Activated naive CD4-positive, alpha-beta T cell treated with anti-CD3 and anti-CD28 coated beads for 36 hours (primary cell): ENCODE measurements at regions of chr7 and their contacts with region 1.

Region 1: GRCh38 chr7:112789817-112790585 is at the start of gene TMEM168:
- DNase-seq: peak; percentile 90
- H3K4me3 Mint-ChIP-seq: peak within 1 kb of the TSS; percentile 93
- H3K27ac Mint-ChIP-seq: peak within 1 kb of the TSS; percentile 85
- H3K4me1 Mint-ChIP-seq: peaks cover 43% of the 10 kb centered on the region
- H3K27me3 Mint-ChIP-seq: no peaks in the 10 kb centered on the region
- total RNA-seq, gene TMEM168: 18.6 to 20.4 TPM

Region 2: GRCh38 chr7:112206238-112207044 is 583.6 kb before region 1 on chr7 and contains the starts of genes DOCK4 and ZNF277:
- CTCF ChIA-PET with region 1: no interaction called
- intact Hi-C with region 1: loop called (anchors 1 kb)
- DNase-seq: peak; percentile 99
- H3K4me3 Mint-ChIP-seq: peak within 1 kb of the TSS; percentile 97
- H3K27ac Mint-ChIP-seq: peak within 1 kb of the TSS; percentile 71
- H3K4me1 Mint-ChIP-seq: peaks cover 35% of the 10 kb centered on the region
- H3K27me3 Mint-ChIP-seq: peaks cover 28% of the 10 kb centered on the region
- total RNA-seq, gene DOCK4: 0.43 to 0.62 TPM
- total RNA-seq, gene ZNF277: 27.0 to 28.2 TPM

Region 3: GRCh38 chr7:112869111-112869757 is 79.2 kb after region 1 on chr7:
- CTCF ChIA-PET with region 1: no interaction called
- intact Hi-C with region 1: loop called (anchors 5 kb)
- DNase-seq: peak; percentile 70
- H3K4me3 Mint-ChIP-seq: no peak overlapping the region
- H3K27ac Mint-ChIP-seq: no peak overlapping the region
- H3K4me1 Mint-ChIP-seq: peaks cover 14% of the 10 kb centered on the region
- H3K27me3 Mint-ChIP-seq: no peaks in the 10 kb centered on the region

Region 4: DNA sequence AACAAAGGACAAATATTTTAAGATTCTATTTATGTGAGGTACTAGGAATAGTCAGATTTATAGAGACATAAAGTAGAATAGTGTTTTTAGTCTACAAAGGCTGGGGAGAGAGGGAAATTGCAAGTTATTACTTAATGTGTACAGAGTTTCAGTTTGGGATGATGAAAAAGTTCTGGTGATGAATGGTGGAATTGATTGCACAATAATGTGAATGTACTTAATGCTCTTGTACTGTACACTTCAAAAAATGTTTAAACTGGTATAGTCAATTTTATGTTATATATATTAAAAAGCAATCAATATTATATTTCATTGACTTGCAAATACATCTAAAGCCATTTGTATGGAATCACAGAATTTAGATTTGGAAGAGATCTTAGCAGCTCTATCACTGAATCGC is 915.4 kb after region 1 on chr7:
- CTCF ChIA-PET with region 1: no interaction called
- intact Hi-C with region 1: loop called (anchors 10 kb)
- DNase-seq: no peak
- H3K4me3 Mint-ChIP-seq: no peak overlapping the region
- H3K27ac Mint-ChIP-seq: no peak overlapping the region
- H3K4me1 Mint-ChIP-seq: no peaks in the 10 kb centered on the region
- H3K27me3 Mint-ChIP-seq: peaks cover 10% of the 10 kb centered on the region